ENCODE measurements at regions of chr5 and their contacts with region 1.

Region 1: DNA sequence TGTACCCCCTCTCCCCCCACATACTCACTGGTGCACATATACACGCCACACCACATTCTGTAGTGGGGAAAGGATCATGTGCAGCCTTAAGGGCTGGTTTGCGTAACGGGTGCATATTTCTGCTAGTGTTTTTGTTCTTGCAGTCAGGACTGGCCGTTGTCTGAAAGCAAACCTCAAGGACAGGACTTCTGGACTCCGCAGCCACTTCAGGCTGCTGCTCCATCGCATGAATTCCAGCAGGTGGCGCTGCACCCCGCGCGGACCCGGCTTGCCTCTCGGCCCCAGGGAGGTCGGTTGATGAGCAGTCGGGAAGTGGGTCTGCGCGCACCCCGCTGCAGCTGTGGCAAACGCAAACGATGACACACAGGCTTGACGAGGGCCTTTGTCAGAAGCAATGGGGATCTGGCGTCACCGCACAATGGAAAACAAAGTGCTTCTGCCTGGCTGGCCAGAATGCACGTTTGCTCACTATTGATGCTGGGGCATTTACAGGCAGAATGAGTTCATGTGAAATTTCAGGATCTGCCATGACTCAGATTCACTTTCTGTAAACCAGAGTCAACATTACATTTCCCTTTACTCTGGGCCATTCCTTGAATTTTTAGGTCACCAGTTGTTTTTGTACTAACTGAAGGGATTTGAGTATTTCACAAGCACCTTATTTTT is 36.3 kb upstream of the GLRX start:
- DNase-seq: peak; percentile 87 to 97 (median 94)
- H3K4me3 ChIP-seq: peak overlapping the region in 54 of 59 donors; percentile 1 to 61 (median 40)
- H3K27ac ChIP-seq: peak overlapping the region in 58 of 59 donors; percentile 61 to 97 (median 88)
- H3K27me3 ChIP-seq: no peaks in the 10 kb centered on the region
- CTCF ChIP-seq: peak; percentile 96 to 100 (median 99)

Region 2: DNA sequence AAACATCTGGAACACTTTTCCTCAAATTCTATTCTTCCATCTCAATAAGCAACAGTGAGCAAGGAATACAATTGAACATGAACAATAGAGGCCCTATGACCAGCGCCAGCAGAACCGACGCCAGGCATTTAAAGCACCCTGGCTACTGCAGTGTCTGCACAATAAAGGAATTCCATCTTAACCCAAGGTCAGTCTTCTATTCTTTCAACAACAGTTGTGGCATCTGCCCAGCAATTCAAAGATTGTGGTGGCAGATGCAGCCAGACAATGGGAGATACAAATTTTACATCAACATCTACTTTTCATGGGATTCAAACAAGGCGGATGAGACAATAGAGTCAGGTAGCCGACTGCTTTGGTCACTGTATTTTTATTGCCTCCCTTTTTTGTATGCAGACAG is 37.0 kb after region 1 on chr5:
- intact Hi-C with region 1: loop called in 1 of 2 experiments (anchors 2 kb)
- DNase-seq: peak in 7 of 10 donors; percentile 44 to 79 (median 57)
- H3K4me3 ChIP-seq: peak overlapping the region in 2 of 59 donors; percentile 23 to 33
- H3K27ac ChIP-seq: peak overlapping the region; percentile 4 to 93 (median 82)
- H3K27me3 ChIP-seq: no peaks in the 10 kb centered on the region
- CTCF ChIP-seq: peak in 7 of 56 donors; percentile 3 to 26 (median 14)

Region 3: GRCh38 chr5:95924720-95925377 is 66.1 kb after region 1 on chr5:
- intact Hi-C with region 1: no loop called
- DNase-seq: no peak
- H3K4me3 ChIP-seq: no peak overlapping the region
- H3K27ac ChIP-seq: peak overlapping the region in 27 of 59 donors; percentile 0 to 63 (median 28)
- H3K27me3 ChIP-seq: no peaks in the 10 kb centered on the region
- CTCF ChIP-seq: no peak

Region 4: GRCh38 chr5:96031811-96032261 is 173.0 kb after region 1 on chr5:
- intact Hi-C with region 1: no loop called
- DNase-seq: no peak
- H3K4me3 ChIP-seq: no peak overlapping the region
- H3K27ac ChIP-seq: no peak overlapping the region
- H3K27me3 ChIP-seq: no peaks in the 10 kb centered on the region
- CTCF ChIP-seq: no peak

Region 5: GRCh38 chr5:96336351-96336985 is 477.7 kb after region 1 on chr5:
- intact Hi-C with region 1: loop called (anchors 1 to 2 kb)
- DNase-seq: peak in 7 of 10 donors; percentile 49 to 90 (median 60)
- H3K4me3 ChIP-seq: peak overlapping the region in 13 of 59 donors; percentile 8 to 42 (median 21)
- H3K27ac ChIP-seq: peak overlapping the region in 27 of 59 donors; percentile 0 to 73 (median 31)
- H3K27me3 ChIP-seq: no peaks in the 10 kb centered on the region
- CTCF ChIP-seq: peak; percentile 79 to 97 (median 92)

Region 6: DNA sequence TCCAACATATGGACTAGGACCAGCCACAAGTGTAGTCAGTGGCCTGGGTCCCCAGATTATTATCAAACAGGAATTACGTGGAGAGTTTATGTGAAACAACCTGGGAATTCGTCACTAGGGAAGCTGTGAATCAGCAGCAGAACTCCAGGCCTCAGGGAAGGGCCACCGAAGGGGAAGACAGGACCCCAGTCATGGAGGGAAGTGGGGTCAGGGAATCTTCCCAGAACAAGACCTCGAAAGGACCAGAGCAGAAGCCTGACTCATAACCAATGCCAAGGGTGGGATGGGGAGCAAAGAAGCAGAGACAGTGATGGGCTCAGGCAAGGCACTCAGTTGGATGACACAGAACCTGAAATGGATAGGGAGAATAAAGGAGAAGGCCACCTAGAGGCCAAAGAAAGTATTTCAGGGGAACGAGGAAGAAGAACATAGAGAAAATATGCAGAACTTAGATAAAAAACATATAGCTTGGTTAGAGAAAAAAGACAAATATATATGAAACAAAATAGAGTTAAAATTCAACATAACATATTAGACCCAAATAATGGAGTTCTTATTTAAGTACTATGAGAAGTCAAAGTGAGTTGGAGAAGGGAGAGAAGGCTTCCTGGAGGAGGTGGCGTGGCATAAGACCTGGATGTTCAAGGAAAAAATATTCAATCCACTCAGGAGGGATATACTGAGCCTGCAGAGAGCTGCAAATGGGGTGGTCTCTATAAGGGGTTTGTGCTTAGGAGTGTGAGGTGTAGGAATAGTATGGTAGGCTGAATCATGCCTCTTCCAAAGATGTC is 736.7 kb after region 1 on chr5:
- intact Hi-C with region 1: loop called in 1 of 2 experiments (anchors 10 kb)
- DNase-seq: no peak
- H3K4me3 ChIP-seq: no peak overlapping the region
- H3K27ac ChIP-seq: no peak overlapping the region
- H3K27me3 ChIP-seq: no peaks in the 10 kb centered on the region
- CTCF ChIP-seq: peak in 23 of 56 donors; percentile 6 to 41 (median 21)

Measured in dorsolateral prefrontal cortex (tissue), 120 donors.